Activated CD4-positive, alpha-beta T cell treated with anti-CD3 and anti-CD28 coated beads, Interleukin-2, amount 10 ng/mL, durations not matched to agents 24 days and 14 days (primary cell): ENCODE measurements at regions of chr2 and their contacts with region 1.

Region 1: GRCh38 chr2:222792001-222792611 is 68.7 kb upstream of the ACSL3 start:
- DNase-seq: no peak
- H3K4me3 Mint-ChIP-seq: no peak overlapping the region
- H3K27ac Mint-ChIP-seq: no peak overlapping the region
- H3K4me1 Mint-ChIP-seq: peaks cover 11% of the 10 kb centered on the region
- H3K27me3 Mint-ChIP-seq: peaks cover 2% of the 10 kb centered on the region

Region 2: GRCh38 chr2:222655787-222656525 is 136.2 kb before region 1 on chr2 and contains the start of gene FARSB:
- intact Hi-C with region 1: loop called (anchors 5 kb)
- DNase-seq: peak; percentile 98
- H3K4me3 Mint-ChIP-seq: peak within 1 kb of the TSS; percentile 100
- H3K27ac Mint-ChIP-seq: peak within 1 kb of the TSS; percentile 98
- H3K4me1 Mint-ChIP-seq: peaks cover 32% of the 10 kb centered on the region
- H3K27me3 Mint-ChIP-seq: peaks cover 2% of the 10 kb centered on the region
- total RNA-seq, gene FARSB: 57.4 and 58.5 TPM in 2 replicates

Region 3: GRCh38 chr2:222690564-222691200 is 101.4 kb before region 1 on chr2:
- intact Hi-C with region 1: loop called (anchors 1 kb)
- DNase-seq: peak; percentile 92
- H3K4me3 Mint-ChIP-seq: no peak overlapping the region
- H3K27ac Mint-ChIP-seq: no peak overlapping the region
- H3K4me1 Mint-ChIP-seq: peaks cover 12% of the 10 kb centered on the region
- H3K27me3 Mint-ChIP-seq: peaks cover 17% of the 10 kb centered on the region

Region 4: GRCh38 chr2:222747526-222748160 is 44.5 kb before region 1 on chr2:
- intact Hi-C with region 1: loop called (anchors 5 kb)
- DNase-seq: no peak
- H3K4me3 Mint-ChIP-seq: no peak overlapping the region
- H3K27ac Mint-ChIP-seq: no peak overlapping the region
- H3K4me1 Mint-ChIP-seq: peaks cover 27% of the 10 kb centered on the region
- H3K27me3 Mint-ChIP-seq: peaks cover 2% of the 10 kb centered on the region

Region 5: DNA sequence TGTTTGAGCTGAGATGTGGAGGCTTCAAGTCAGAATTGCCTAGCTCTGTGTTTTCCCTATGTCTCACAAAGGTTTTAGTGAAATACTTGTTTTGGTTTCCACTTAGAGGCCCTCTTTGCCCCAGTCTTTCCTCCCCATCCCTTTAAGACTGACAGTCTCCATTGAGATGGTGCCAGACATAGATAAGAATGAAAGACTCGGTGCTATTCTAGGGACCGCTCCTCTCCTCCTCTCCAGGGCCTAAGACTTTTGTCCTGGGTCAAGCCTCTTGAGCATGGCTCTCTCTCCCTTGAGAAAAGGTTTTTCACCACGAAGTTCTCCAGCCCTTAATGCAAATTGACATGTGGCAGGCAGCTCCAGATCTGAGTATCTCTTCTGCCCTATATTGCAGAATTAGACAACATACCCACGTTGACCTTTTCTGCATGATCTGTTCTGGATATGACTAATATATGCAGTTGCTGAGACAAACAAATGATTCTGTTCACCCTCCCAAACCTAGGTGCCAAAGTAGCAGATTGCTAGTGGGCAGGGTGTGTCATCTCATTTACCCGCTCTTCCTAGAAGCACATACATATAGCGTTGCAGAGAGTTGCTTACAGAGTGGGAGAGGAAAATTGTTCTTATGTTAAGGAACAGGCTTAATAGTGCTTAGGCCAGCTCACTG is 21.2 kb after region 1 on chr2:
- intact Hi-C with region 1: loop called (anchors 1 kb)
- DNase-seq: peak; percentile 62
- H3K4me3 Mint-ChIP-seq: peak overlapping the region; percentile 30
- H3K27ac Mint-ChIP-seq: peak overlapping the region; percentile 96
- H3K4me1 Mint-ChIP-seq: peaks cover 22% of the 10 kb centered on the region
- H3K27me3 Mint-ChIP-seq: peaks cover 4% of the 10 kb centered on the region

Region 6: DNA sequence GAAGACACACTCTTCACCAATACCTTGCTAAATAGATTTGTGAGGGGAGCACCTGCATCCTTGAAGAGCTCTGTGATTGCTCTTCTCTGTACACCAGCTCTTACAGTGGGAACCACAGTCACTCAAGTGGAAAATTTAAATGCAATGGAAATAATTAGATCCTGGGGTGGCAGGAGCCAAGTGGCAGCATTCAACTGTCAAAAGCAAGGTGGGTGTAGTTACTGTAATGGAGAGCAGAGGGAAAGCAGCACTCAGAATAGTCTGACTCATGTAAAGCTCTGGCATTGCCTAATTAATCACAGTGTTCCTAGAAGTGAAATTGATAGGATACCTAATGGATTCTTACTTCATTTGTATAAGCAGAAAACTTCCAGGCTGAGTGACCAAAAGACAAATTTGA is 505.7 kb after region 1 on chr2:
- intact Hi-C with region 1: no loop called
- DNase-seq: no peak
- H3K4me3 Mint-ChIP-seq: no peak overlapping the region
- H3K27ac Mint-ChIP-seq: no peak overlapping the region
- H3K4me1 Mint-ChIP-seq: no peaks in the 10 kb centered on the region
- H3K27me3 Mint-ChIP-seq: no peaks in the 10 kb centered on the region